Naive thymus-derived CD4-positive, alpha-beta T cell (primary cell): ENCODE measurements at regions of chr12 and their contacts with region 1.

Region 1: DNA sequence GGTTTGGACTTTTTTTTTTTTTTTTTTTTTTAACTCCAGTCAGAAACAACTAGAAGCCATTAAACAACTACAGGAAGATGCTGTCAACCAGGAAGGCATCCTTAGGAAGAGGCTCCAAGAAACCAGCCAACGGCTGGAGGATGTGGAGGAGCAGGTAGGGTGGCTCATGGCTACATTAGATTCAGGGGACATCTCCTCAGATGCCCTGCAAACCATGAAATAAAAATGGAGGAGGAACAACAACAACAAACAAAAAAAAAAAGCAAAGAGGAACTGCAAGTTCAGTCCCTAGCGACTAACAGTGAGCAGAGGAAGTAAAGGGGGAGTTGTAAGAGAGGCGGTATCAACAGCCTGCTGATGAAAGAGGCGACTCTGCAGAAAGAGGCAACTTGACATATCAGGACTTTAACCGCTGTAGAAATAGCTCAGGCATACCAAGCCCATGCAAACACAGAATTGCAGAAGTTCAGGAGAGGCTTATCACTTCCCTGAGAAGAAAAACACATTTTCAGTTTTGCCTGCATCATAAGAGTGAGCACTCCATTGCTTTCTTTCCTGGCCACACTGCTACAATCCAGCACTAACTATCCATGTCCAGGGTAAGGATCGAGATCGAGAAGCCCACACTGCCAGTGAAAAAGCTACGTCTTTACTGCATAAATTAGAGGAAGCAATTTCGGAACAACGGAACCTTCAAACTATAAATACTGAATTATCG is 103.5 kb upstream of the BCAT1 start:
- DNase-seq: peak in 8 of 9 donors; percentile 51 to 92 (median 87)
- ATAC-seq: peak; percentile 85
- H3K4me3 ChIP-seq: peak overlapping the region; percentile 94
- H3K4me3 Mint-ChIP-seq: peak overlapping the region; percentile 88 to 100 (median 95)
- H3K27ac ChIP-seq: peak overlapping the region; percentile 76
- H3K27ac Mint-ChIP-seq: peak overlapping the region; percentile 92 to 100 (median 99)
- H3K4me1 ChIP-seq: peaks cover 22 to 25% of the 10 kb centered on the region in 2 donors
- H3K4me1 Mint-ChIP-seq: peaks cover 29 to 50% (median 42%) of the 10 kb centered on the region in 7 donors
- H3K27me3 ChIP-seq: no peaks in the 10 kb centered on the region
- H3K27me3 Mint-ChIP-seq: peaks cover 0 to 3% (median 0%) of the 10 kb centered on the region in 5 donors

Region 2: GRCh38 chr12:24948757-24949722 is 103.3 kb before region 1 on chr12 and contains the start of gene BCAT1:
- CTCF ChIA-PET with region 1: no interaction called
- POLR2A ChIA-PET with region 1: no interaction called
- intact Hi-C with region 1: loop called in 1 of 2 experiments (anchors 1 kb)
- DNase-seq: peak in 4 of 9 donors; percentile 7 to 62 (median 18)
- ATAC-seq: peak; percentile 72
- H3K4me3 ChIP-seq: peak within 1 kb of the TSS; percentile 51
- H3K4me3 Mint-ChIP-seq: peak within 1 kb of the TSS; percentile 82 to 94 (median 88)
- H3K27ac ChIP-seq: no peak within 1 kb of the TSS
- H3K27ac Mint-ChIP-seq: peak within 1 kb of the TSS in 5 of 9 donors; percentile 36 to 86 (median 62)
- H3K4me1 ChIP-seq: peaks cover 8 to 14% of the 10 kb centered on the region in 2 donors
- H3K4me1 Mint-ChIP-seq: peaks cover 13 to 57% (median 27%) of the 10 kb centered on the region in 7 donors
- H3K27me3 ChIP-seq: peaks cover 0 to 8% of the 10 kb centered on the region in 2 donors
- H3K27me3 Mint-ChIP-seq: peaks cover 21 to 68% (median 62%) of the 10 kb centered on the region in 5 donors
- total RNA-seq, gene BCAT1: 0.70 to 29.3 (median 1.9) TPM

Region 3: GRCh38 chr12:25041006-25041741 is 11.2 kb before region 1 on chr12:
- CTCF ChIA-PET with region 1: interaction called, 11 read pairs
- POLR2A ChIA-PET with region 1: interaction called, 4 read pairs
- intact Hi-C with region 1: no loop called
- DNase-seq: no peak
- ATAC-seq: no peak
- H3K4me3 ChIP-seq: no peak overlapping the region
- H3K4me3 Mint-ChIP-seq: no peak overlapping the region
- H3K27ac ChIP-seq: no peak overlapping the region
- H3K27ac Mint-ChIP-seq: peak overlapping the region in 3 of 9 donors; percentile 4 to 46 (median 18)
- H3K4me1 ChIP-seq: no peaks in the 10 kb centered on the region
- H3K4me1 Mint-ChIP-seq: peaks cover 0 to 7% (median 5%) of the 10 kb centered on the region in 7 donors
- H3K27me3 ChIP-seq: no peaks in the 10 kb centered on the region
- H3K27me3 Mint-ChIP-seq: peaks cover 0 to 31% (median 14%) of the 10 kb centered on the region in 5 donors

Region 4: DNA sequence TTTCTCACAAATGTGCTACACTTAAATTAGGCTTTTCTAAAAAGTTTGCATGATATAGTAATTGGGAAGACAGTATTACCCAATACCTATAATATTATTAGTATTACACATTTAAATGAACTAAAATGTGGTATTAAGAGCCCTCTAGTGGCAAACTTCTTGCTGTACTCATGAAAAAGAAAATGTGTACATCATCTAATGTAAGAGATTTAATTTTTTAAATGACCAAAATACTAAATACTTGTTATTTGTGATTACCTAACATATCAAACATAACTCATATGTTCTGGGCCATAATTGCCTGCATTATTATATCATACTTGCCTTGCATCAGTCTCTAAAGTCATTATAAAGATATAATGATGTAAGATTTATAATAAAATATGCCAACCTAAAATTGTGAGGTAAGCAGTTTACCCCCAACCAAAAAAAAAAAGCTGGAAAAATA is 78.4 kb after region 1 on chr12:
- CTCF ChIA-PET with region 1: interaction called, 7 read pairs
- POLR2A ChIA-PET with region 1: no interaction called
- intact Hi-C with region 1: loop called (anchors 1 to 5 kb)
- DNase-seq: peak in 6 of 9 donors; percentile 21 to 54 (median 38)
- ATAC-seq: no peak
- H3K4me3 ChIP-seq: no peak overlapping the region
- H3K4me3 Mint-ChIP-seq: no peak overlapping the region
- H3K27ac ChIP-seq: no peak overlapping the region
- H3K27ac Mint-ChIP-seq: no peak overlapping the region
- H3K4me1 ChIP-seq: no peaks in the 10 kb centered on the region
- H3K4me1 Mint-ChIP-seq: peaks cover 0 to 1% (median 0%) of the 10 kb centered on the region in 7 donors
- H3K27me3 ChIP-seq: no peaks in the 10 kb centered on the region
- H3K27me3 Mint-ChIP-seq: peaks cover 0 to 7% (median 0%) of the 10 kb centered on the region in 5 donors

Region 5: DNA sequence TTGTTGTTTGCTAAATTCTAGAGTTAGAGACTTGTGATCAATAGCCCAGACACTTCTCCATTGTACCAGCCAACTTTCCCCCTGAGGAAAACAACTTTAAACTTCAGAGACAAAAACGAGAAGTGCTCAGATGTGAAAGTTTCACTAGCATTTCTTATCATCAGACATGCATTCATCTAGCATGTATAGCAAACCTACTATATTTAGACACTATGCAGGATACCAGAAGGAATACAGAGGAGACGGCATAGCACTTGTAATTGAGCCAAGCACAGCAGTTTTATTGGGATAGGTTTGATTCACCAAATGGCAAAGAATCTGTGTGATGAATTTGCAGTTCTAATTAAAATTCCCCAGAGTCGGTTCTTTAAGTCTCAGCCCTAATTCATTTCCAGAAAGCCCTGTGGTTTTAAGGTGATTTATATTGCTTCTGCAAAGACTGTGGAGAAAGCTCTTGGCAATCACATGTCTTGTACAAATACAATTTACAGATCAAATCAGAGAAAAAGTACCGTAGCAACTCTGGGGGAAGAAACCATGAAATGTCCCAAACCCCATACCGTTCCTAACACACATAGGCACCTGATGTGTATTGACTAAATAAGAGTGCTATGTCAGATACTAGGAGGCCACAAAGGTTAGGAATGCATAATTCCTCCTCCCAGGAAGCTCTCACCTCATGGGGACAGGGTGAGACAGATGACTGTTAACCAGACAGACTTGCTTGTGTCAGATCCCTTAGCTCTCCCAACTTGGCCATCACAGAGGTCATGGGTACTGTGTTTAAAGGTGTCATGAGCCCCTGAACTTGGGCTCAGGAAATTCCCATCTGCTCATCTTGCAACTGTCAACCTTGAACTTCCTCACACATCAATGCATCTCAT is 268.0 kb after region 1 on chr12:
- CTCF ChIA-PET with region 1: no interaction called
- POLR2A ChIA-PET with region 1: interaction called, 5 read pairs
- intact Hi-C with region 1: loop called in 1 of 2 experiments (anchors 5 kb)
- DNase-seq: no peak
- ATAC-seq: no peak
- H3K4me3 ChIP-seq: no peak overlapping the region
- H3K4me3 Mint-ChIP-seq: peak overlapping the region in 5 of 10 donors; percentile 8 to 79 (median 49)
- H3K27ac ChIP-seq: no peak overlapping the region
- H3K27ac Mint-ChIP-seq: peak overlapping the region in 8 of 9 donors; percentile 23 to 96 (median 72)
- H3K4me1 ChIP-seq: peaks cover 19 to 44% of the 10 kb centered on the region in 2 donors
- H3K4me1 Mint-ChIP-seq: peaks cover 33 to 50% (median 49%) of the 10 kb centered on the region in 7 donors
- H3K27me3 ChIP-seq: no peaks in the 10 kb centered on the region
- H3K27me3 Mint-ChIP-seq: peaks cover 0 to 6% (median 0%) of the 10 kb centered on the region in 5 donors

Region 6: DNA sequence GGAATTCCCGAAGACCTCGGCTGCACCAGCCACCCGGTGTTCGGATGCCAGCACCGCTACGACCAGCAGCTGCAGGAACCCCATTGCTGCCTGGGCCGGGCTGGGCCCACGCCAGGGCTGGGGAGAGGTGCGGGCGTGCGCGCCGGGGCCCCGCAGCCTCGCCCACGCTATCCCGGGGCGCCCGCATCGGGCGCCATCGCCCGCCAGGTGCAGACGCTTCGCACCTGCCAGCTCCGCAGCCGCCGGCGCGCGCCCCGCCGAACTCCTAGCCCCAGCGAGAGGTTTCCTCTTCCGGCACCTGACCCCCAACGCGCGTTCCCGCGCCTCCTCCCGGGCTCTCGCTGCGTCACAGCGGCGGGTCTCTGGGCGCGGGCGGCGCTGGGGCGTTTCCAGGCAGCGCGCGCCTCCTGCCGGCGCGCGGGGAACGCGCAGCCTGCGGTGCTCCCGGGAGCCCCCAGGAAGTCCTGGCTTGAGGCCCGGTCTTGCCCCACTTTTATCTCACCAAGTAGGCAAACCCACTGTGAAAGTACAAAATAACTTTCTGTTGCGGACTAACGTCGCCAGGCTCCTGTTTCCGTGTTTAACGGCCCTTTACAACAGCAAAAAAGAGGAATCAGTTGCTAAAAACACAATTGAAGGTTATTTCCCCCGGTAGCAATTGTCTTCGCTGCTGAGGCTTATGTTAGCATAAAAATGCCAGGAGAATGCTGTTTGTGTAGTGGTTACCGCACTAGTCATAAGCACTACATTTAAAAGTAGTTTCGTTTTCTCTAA is 1961.9 kb after region 1 on chr12 and contains the start of gene TM7SF3:
- CTCF ChIA-PET with region 1: no interaction called
- POLR2A ChIA-PET with region 1: no interaction called
- intact Hi-C with region 1: loop called in 1 of 2 experiments (anchors 1 kb)
- DNase-seq: peak; percentile 96 to 98 (median 97)
- ATAC-seq: peak; percentile 95
- H3K4me3 ChIP-seq: peak within 1 kb of the TSS; percentile 92
- H3K4me3 Mint-ChIP-seq: peak within 1 kb of the TSS; percentile 80 to 97 (median 94)
- H3K27ac ChIP-seq: peak within 1 kb of the TSS; percentile 84
- H3K27ac Mint-ChIP-seq: peak within 1 kb of the TSS; percentile 88 to 97 (median 96)
- H3K4me1 ChIP-seq: peaks cover 24 to 29% of the 10 kb centered on the region in 2 donors
- H3K4me1 Mint-ChIP-seq: peaks cover 22 to 60% (median 51%) of the 10 kb centered on the region in 7 donors
- H3K27me3 ChIP-seq: no peaks in the 10 kb centered on the region
- H3K27me3 Mint-ChIP-seq: no peaks in the 10 kb centered on the region
- total RNA-seq, gene TM7SF3: 24.4 to 57.3 (median 28.5) TPM